ENCODE measurements at regions of chr15 and their contacts with region 1.

Region 1: GRCh38 chr15:92917606-92918407 is 17.7 kb downstream of the CHD2 start:
- DNase-seq: peak; percentile 77 to 96 (median 80)
- ATAC-seq: peak; percentile 70
- H3K4me3 ChIP-seq: no peak overlapping the region
- H3K27ac ChIP-seq: peak overlapping the region; percentile 82
- H3K4me1 ChIP-seq: peaks cover 0 to 39% of the 10 kb centered on the region in 2 experiments; a peak in 4 of 5 replicates
- H3K27me3 ChIP-seq: no peaks in the 10 kb centered on the region
- CTCF ChIP-seq: peak; percentile 76 to 94 (median 86)
- EP300 ChIP-seq: peak; percentile 51; the same call in 1 of the 2 replicates
- POLR2A ChIP-seq: peak; percentile 46; the same call in 1 of the 2 replicates
- RAD21 ChIP-seq: peak; percentile 88 to 90

Region 2: GRCh38 chr15:92521624-92522008 is 396.2 kb before region 1 on chr15:
- CTCF ChIA-PET with region 1: no interaction called
- POLR2A ChIA-PET with region 1: no interaction called
- in situ Hi-C with region 1: no loop called
- intact Hi-C with region 1: no loop called
- DNase-seq: peak; percentile 44 to 58 (median 54)
- ATAC-seq: peak; percentile 95
- H3K4me3 ChIP-seq: no peak overlapping the region
- H3K27ac ChIP-seq: no peak overlapping the region
- H3K4me1 ChIP-seq: no peaks in the 10 kb centered on the region
- H3K27me3 ChIP-seq: peaks cover 0 to 12% of the 10 kb centered on the region in 2 experiments; a peak in 2 of 5 replicates
- CTCF ChIP-seq: peak; percentile 72 to 81 (median 77)
- EP300 ChIP-seq: no peak
- POLR2A ChIP-seq: no peak
- RAD21 ChIP-seq: peak; percentile 69 to 75

Region 3: DNA sequence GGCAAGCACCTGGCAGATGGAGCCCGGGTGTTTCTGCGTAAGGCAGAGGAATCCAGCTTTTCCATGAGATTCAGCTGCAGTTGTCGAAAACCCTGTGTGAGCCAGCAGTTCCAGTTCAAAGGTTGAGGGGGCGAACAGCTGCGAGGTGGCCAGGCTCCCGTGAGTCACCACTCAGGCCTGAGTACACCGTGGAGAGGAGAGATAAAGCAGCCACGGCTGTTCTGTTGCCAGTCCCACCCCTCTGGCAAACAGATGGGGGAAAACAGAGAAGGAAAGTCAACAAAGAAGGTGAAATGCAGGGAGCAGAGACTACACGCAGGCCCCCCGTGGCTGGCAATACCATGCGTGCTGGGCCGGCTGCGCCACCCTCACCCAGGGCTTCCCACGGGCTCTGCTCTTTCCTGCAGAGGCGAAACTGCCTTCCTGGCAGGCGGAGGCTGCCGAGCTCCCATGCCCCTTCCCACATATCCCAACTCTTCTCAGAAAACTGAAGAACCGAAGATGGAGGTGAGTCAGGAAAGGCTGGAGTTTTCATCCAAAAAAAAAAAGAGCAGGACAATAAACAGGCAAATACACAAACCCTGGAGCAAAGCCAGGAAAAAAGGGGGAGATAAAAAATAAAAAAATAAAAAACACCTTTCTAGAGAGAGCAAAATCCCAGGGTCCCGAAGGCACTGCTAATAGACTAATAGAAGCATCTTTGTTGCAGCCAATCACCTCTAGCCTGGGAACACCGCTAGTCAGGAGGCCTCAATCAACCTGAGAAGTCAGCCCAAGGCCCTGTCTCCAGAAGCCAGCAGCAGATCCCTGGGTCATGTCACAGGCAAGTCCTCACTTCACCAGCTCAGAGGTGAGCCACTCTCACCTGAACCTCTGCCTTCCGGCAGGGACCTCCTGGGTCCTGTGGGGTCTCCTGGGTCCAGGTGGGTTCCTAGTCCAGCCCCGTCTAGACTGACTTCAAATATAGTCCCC is 300.0 kb before region 1 on chr15:
- CTCF ChIA-PET with region 1: no interaction called
- POLR2A ChIA-PET with region 1: interaction called, 3 read pairs
- in situ Hi-C with region 1: no loop called
- intact Hi-C with region 1: loop called (anchors 10 kb)
- DNase-seq: peak; percentile 85 to 91 (median 88)
- ATAC-seq: peak; percentile 88
- H3K4me3 ChIP-seq: no peak overlapping the region; the same call in 1 of the 2 replicates
- H3K27ac ChIP-seq: peak overlapping the region; percentile 35; the same call in 1 of the 3 replicates
- H3K4me1 ChIP-seq: peaks cover 20 to 21% of the 10 kb centered on the region in 2 experiments; a peak in 4 of 5 replicates
- H3K27me3 ChIP-seq: peaks cover 0 to 17% of the 10 kb centered on the region in 2 experiments; a peak in 2 of 5 replicates
- CTCF ChIP-seq: no peak
- EP300 ChIP-seq: peak; percentile 80
- POLR2A ChIP-seq: no peak
- RAD21 ChIP-seq: no peak

Region 4: GRCh38 chr15:92797168-92797951 is 120.4 kb before region 1 on chr15:
- CTCF ChIA-PET with region 1: interaction called, 38 read pairs
- POLR2A ChIA-PET with region 1: interaction called, 7 read pairs
- in situ Hi-C with region 1: loop called (anchors 5 kb)
- intact Hi-C with region 1: loop called (anchors 1 kb)
- DNase-seq: peak; percentile 52 to 84 (median 57)
- ATAC-seq: peak; percentile 74
- H3K4me3 ChIP-seq: no peak overlapping the region
- H3K27ac ChIP-seq: peak overlapping the region; percentile 28; the same call in 2 of the 3 replicates
- H3K4me1 ChIP-seq: peaks cover 18 to 23% of the 10 kb centered on the region in 2 experiments
- H3K27me3 ChIP-seq: no peaks in the 10 kb centered on the region
- CTCF ChIP-seq: peak; percentile 40 to 80 (median 65); a peak in 4 of 6 replicates
- EP300 ChIP-seq: no peak
- POLR2A ChIP-seq: no peak
- RAD21 ChIP-seq: peak; percentile 80 to 91

Region 5: DNA sequence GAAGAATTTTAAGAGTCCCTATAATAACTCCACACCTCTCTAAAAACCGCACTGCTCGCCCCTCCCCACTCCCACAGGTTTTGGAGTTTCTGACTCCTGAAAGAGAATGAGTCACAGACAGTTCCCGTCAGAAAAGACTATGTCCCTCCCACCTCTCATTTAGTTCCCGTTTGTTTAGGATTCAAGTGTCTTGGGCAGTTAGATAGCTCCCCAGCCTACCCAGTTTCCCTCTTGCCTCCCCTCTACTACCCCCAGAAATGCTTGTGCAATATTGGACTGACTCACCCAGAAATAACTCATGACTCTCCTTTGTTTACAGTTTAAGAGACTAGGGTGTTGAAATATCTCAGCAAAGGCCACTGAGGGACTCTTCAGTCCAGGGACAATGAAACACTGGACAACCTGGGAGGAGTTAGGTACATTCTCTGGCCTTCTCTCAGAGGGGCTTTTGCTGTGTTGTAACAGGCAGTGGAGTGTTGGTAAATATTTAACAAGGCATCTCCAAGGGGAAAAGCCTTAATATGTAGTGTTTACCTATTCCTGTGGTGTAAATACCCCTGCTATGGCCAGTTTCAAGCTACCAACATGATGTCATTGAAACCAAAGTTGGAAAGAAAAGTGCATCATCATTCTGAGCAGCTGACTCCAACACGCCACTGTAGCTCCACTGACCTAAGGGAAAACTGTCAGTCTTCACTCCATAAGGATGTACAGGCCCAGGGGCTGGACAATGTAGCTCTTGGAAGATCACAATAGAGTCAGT is 113.8 kb before region 1 on chr15:
- CTCF ChIA-PET with region 1: interaction called, 11 read pairs
- POLR2A ChIA-PET with region 1: interaction called, 23 read pairs
- in situ Hi-C with region 1: loop called (anchors 5 kb)
- intact Hi-C with region 1: loop called (anchors 1 kb)
- DNase-seq: peak; percentile 72 to 96 (median 80)
- ATAC-seq: peak; percentile 85
- H3K4me3 ChIP-seq: no peak overlapping the region
- H3K27ac ChIP-seq: peak overlapping the region; percentile 99
- H3K4me1 ChIP-seq: peaks cover 42 to 48% of the 10 kb centered on the region in 2 experiments
- H3K27me3 ChIP-seq: no peaks in the 10 kb centered on the region
- CTCF ChIP-seq: 0 out of 6 replicates have a peak, but pooled peaks of 1 of the 3 experiments have one; percentile 1
- EP300 ChIP-seq: peak; percentile 93
- POLR2A ChIP-seq: peak; percentile 53
- RAD21 ChIP-seq: no peak

Region 6: GRCh38 chr15:92808978-92809879 is 108.6 kb before region 1 on chr15:
- CTCF ChIA-PET with region 1: interaction called, 11 read pairs
- POLR2A ChIA-PET with region 1: interaction called, 23 read pairs
- in situ Hi-C with region 1: loop called (anchors 5 kb)
- intact Hi-C with region 1: loop called (anchors 1 kb)
- DNase-seq: peak; percentile 95 to 98 (median 95)
- ATAC-seq: peak; percentile 83
- H3K4me3 ChIP-seq: peak overlapping the region; percentile 39
- H3K27ac ChIP-seq: peak overlapping the region; percentile 92
- H3K4me1 ChIP-seq: peaks cover 19 to 38% of the 10 kb centered on the region in 2 experiments
- H3K27me3 ChIP-seq: no peaks in the 10 kb centered on the region
- CTCF ChIP-seq: peak; percentile 91 to 97 (median 96)
- EP300 ChIP-seq: peak; percentile 72
- POLR2A ChIP-seq: peak; percentile 87
- RAD21 ChIP-seq: peak; percentile 94 to 96

Region 7: GRCh38 chr15:92848852-92849598 is 68.8 kb before region 1 on chr15:
- CTCF ChIA-PET with region 1: no interaction called
- POLR2A ChIA-PET with region 1: no interaction called
- in situ Hi-C with region 1: no loop called
- intact Hi-C with region 1: no loop called
- DNase-seq: peak; percentile 43 to 80 (median 49)
- ATAC-seq: peak; percentile 82
- H3K4me3 ChIP-seq: no peak overlapping the region
- H3K27ac ChIP-seq: peak overlapping the region; percentile 41; the same call in 2 of the 3 replicates
- H3K4me1 ChIP-seq: peaks cover 8 to 23% of the 10 kb centered on the region in 2 experiments
- H3K27me3 ChIP-seq: no peaks in the 10 kb centered on the region
- CTCF ChIP-seq: no peak
- EP300 ChIP-seq: peak; percentile 77
- POLR2A ChIP-seq: no peak
- RAD21 ChIP-seq: 0 out of 4 replicates have a peak, but pooled peaks of 1 of the 2 experiments have one; percentile 31

Region 8: DNA sequence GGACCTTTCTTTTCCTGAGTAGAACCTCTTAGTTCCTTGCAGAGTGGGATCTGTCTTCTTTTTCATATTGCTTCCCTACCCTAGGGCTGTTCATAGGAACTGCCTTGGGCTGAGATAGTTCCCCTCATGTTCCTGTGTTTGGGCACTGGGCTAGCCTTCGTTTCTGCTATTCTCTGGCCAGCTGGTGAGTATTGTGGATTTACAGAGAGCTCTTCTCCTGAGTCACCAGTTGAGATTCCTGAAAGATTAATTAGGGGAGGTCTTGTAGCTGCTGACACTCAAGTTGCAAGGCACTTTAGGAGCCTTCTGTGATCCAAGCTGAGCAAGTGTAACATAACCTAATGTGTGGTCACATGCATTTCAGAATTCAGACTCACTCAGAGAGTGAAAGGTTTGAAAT is 13.0 kb after region 1 on chr15:
- CTCF ChIA-PET with region 1: no interaction called
- POLR2A ChIA-PET with region 1: interaction called, 12 read pairs
- in situ Hi-C with region 1: no loop called
- intact Hi-C with region 1: no loop called
- DNase-seq: no peak
- ATAC-seq: peak; percentile 25
- H3K4me3 ChIP-seq: no peak overlapping the region
- H3K27ac ChIP-seq: no peak overlapping the region
- H3K4me1 ChIP-seq: no peaks in the 10 kb centered on the region
- H3K27me3 ChIP-seq: no peaks in the 10 kb centered on the region
- CTCF ChIP-seq: no peak
- EP300 ChIP-seq: no peak
- POLR2A ChIP-seq: no peak
- RAD21 ChIP-seq: no peak

Region 9: GRCh38 chr15:92936693-92937092 is 18.9 kb after region 1 on chr15:
- CTCF ChIA-PET with region 1: no interaction called
- POLR2A ChIA-PET with region 1: interaction called, 12 read pairs
- in situ Hi-C with region 1: no loop called
- intact Hi-C with region 1: no loop called
- DNase-seq: no peak
- ATAC-seq: no peak
- H3K4me3 ChIP-seq: no peak overlapping the region
- H3K27ac ChIP-seq: no peak overlapping the region
- H3K4me1 ChIP-seq: no peaks in the 10 kb centered on the region
- H3K27me3 ChIP-seq: no peaks in the 10 kb centered on the region
- CTCF ChIP-seq: no peak
- EP300 ChIP-seq: no peak
- POLR2A ChIP-seq: no peak
- RAD21 ChIP-seq: no peak

Measured in K562 (cell line).